ENCODE measurements at regions of chr5 and their contacts with region 1.

Region 1: DNA sequence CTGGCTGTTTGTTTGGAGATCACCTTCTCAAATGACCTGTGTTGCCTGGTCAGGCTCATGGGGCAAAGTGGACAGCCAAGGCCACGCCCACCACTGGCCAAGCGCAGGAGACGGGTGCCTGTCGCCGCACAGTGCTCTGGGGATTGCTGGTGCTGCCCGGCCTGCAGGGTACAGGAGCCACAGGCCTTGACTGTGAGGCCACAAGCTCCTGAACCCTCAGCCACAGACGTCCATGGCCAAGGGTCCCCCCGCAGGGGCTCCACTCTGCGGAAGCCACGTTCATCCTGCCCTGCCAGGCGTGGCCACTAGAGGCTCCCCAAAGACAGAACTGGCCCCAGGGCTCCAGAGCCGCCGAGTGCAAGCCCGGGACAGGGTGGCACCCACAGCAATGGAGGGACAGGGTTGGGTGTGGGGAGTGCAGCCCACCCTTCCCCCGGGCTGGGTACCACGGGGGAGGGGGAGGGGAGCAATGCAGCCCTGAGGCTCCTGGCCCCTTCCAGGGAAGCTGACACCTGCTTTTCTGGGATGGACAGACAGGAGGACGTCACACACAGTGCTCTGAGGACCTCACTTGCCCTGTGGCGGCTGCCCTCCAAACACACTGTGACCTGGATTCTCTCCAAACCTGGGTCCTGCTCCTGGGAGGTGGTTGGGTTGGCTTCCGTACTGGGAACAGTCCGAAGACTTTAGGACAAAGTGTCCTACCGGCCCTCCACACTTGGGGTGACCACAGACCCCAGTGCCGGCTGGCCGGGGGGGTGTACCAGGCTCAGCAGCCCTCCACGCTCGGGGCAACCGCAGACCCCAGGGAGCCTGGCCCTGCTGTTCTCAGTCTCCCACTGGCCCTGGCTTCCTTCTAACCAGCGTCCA is 21.5 kb downstream of the TPPP start:
- DNase-seq: peak; percentile 78
- H3K4me3 ChIP-seq: no peak overlapping the region
- H3K27ac ChIP-seq: no peak overlapping the region
- H3K4me1 ChIP-seq: no peaks in the 10 kb centered on the region
- H3K27me3 ChIP-seq: peaks cover 24% of the 10 kb centered on the region

Region 2: DNA sequence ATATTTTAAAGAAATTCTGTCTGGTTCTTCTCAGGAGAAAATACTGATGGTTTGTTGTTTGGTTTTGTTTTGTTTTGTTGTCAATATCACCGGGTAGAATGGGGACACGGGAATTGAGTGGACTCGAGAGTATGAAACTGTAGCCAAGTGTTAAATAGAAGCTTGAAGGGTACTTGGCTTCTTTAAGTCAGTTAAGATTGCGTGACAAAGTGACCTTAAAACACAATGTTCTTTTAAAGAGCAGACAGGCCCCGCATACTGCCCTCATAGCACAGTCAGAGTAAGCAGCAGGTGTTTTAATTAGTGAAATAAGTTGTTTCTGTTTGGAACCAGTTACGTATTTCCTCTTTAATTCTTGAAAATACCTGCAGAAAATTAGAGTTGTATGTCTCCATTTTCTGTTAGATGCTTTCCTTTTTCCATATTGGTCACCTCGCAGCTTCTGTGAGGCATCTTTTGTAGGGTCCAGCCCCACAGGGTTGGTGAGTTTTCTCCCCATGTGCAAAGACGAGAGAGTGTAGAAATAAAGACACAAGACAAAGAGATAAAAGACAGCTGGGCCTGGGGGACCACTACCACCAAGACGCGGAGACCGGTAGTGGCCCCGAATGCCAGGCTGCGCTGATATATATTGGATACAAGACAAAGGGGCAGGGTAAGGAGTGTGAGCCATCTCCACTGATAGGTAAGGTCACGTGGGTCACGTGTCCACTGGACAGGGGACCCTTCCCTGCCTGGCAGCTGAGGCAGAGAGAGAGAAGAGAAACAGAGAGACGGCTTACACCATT is 230.6 kb after region 1 on chr5:
- in situ Hi-C with region 1: loop called (anchors 10 kb)
- DNase-seq: no peak
- H3K4me3 ChIP-seq: no peak overlapping the region
- H3K27ac ChIP-seq: no peak overlapping the region
- H3K4me1 ChIP-seq: no peaks in the 10 kb centered on the region
- H3K27me3 ChIP-seq: no peaks in the 10 kb centered on the region

Region 3: DNA sequence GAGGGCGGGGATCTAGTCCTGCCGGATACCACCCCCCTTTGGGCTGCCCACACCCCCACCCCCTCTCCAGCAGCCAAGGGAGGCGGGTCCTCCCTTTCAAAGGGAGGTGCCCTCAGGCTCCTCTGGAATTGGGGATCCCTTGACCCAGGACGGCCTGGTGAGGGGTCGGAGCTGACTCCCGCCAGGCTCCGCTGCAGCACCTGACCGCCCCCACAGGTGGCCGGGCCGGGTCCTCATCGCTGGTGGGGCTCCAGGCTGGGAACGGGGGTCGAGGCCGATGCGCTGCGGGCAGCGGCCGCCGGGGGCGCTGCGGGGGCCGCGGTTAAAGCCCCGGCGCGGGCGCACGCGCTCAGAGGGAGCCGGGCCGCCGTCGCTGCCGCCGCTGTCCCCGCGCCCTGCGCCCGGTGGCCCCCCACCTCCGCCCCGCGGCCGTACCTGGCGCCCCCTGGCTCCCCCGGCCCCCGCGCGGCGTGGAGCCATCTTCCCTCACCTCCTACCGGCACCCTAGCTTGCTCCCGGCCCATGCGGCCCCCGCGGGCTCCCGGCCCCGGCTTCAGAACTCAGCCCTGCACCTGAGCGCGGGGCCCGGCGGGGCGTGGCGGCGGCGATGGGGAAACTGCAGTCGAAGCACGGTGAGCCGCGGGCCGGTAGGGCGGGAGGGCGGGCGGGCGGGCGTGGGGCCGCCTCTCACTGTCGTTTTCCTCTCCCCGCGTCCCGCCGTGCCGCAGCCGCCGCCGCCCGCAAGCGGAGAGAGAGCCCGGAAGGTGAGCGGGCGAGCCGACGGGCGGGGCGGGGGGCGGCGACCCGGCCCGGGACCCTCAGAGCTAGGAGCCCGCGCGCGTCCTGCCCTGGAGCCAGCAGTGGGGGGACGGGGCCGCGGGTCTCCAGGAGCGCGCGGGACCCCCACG is 337.0 kb after region 1 on chr5 and contains the start of gene NKD2:
- in situ Hi-C with region 1: no loop called
- DNase-seq: peak; percentile 56
- H3K4me3 ChIP-seq: no peak within 1 kb of the TSS
- H3K27ac ChIP-seq: no peak within 1 kb of the TSS
- H3K4me1 ChIP-seq: no peaks in the 10 kb centered on the region
- H3K27me3 ChIP-seq: peaks cover 50% of the 10 kb centered on the region
- total RNA-seq, gene NKD2: not detected in 2 replicates

Region 4: DNA sequence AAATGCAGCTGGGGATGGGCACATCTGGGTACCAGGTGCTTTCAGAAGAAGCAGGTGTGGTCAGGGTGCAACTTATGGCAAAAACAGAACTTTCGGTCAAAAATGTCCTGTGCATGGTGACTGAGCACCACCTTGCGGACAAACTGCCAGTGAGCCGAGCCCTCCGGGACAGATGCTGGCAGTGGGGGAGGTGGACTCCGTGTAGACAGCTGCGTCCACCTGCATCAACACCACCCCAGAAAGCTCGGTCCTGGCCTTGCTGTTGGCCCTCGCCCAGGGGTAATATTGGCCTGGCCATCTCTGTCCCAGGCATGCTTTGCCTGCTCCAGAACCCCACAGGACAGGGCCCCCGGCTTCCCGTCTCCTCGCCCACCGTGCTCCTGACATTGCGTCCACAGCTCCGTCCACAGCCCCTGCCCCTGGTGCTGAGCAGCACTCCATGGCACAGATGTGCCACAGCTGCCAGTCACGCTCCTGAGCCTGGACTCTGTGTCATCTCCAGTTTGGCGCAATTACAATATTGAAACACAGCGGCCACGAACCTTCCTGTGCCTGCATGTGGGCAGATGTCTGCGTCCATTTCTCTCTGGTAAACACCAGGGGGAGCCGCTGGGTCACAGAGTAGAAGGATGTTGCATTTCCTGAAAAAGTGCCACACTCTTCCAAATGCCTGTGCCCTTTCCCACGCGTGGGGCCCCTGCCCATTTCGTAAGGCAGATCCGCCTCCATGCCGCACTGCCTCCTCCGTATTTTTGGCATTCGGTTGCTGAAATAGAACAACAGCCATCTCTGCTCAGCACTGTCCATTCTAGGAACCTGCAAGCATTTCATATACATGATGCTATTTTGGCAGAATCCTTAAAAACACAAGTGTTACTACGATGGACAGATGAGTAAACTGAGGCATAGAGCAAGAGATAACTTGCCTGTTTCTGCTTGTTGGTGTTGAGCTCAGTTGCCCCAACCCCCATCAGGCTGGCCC is 496.3 kb after region 1 on chr5:
- in situ Hi-C with region 1: loop called (anchors 25 kb)
- DNase-seq: peak; percentile 90
- H3K4me3 ChIP-seq: no peak overlapping the region
- H3K27ac ChIP-seq: no peak overlapping the region
- H3K4me1 ChIP-seq: peaks cover 3% of the 10 kb centered on the region; the same call in 1 of the 2 replicates
- H3K27me3 ChIP-seq: no peaks in the 10 kb centered on the region

Region 5: DNA sequence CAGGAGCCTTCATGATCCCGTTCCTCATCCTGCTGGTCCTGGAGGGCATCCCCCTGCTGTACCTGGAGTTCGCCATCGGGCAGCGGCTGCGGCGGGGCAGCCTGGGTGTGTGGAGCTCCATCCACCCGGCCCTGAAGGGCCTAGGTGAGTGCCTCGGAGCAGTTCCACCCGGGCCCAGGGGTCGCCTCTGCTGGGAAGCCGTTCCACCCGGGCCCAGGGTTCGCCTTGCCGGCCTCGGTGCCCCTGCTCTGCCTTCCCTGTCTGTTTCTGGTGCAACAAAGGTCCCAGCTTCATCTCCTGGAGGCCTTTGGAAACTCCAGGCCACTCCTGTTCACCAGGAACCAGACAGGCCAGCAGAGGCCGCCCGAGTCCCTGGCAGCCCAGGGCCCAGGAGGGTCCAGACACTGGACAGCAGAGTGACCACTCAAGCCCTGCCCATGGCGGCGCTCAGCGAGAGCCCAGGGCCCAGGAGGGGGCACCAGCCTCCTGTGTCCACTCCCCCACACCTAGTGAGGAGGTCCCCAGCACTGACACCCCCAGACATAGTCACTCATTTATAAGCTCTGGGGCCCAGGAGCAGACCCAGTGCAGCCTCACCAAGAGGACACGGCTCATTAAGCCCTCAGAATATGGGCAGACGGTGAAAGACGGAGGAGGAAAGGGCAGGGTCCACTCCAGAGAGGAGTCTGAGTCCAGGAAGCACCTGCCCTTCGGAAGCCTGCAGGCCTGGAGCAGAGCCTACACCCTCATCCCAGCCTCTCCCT is 537.2 kb after region 1 on chr5:
- in situ Hi-C with region 1: no loop called
- DNase-seq: peak; percentile 25
- H3K4me3 ChIP-seq: no peak overlapping the region
- H3K27ac ChIP-seq: no peak overlapping the region
- H3K4me1 ChIP-seq: no peaks in the 10 kb centered on the region
- H3K27me3 ChIP-seq: peaks cover 14% of the 10 kb centered on the region

Measured in GM23248 (cell line).